ENCODE measurements at regions of chr2 and their contacts with region 1.

Region 1: GRCh38 chr2:235493775-235494715 is at the start of gene AGAP1:
- DNase-seq: peak; percentile 94
- H3K4me3 ChIP-seq: peak within 1 kb of the TSS; percentile 51 to 80 (median 68)
- H3K27ac ChIP-seq: peak within 1 kb of the TSS; percentile 80 to 88 (median 87)
- H3K4me1 ChIP-seq: peaks cover 0 to 35% (median 28%) of the 10 kb centered on the region in 4 donors
- H3K27me3 ChIP-seq: no peaks in the 10 kb centered on the region
- CTCF ChIP-seq: no peak
- EP300 ChIP-seq: no peak
- POLR2A ChIP-seq: no peak
- total RNA-seq, gene AGAP1: 18.6 to 42.7 (median 23.8) TPM

Region 2: GRCh38 chr2:234951664-234952269 is 542.3 kb before region 1 on chr2 and contains the start of gene SH3BP4:
- intact Hi-C with region 1: loop called (anchors 5 kb)
- DNase-seq: peak; percentile 86
- H3K4me3 ChIP-seq: peak within 1 kb of the TSS; percentile 70 to 97 (median 83)
- H3K27ac ChIP-seq: peak within 1 kb of the TSS; percentile 81 to 95 (median 88)
- H3K4me1 ChIP-seq: peaks cover 0 to 53% (median 44%) of the 10 kb centered on the region in 4 donors
- H3K27me3 ChIP-seq: no peaks in the 10 kb centered on the region
- CTCF ChIP-seq: no peak
- EP300 ChIP-seq: no peak
- POLR2A ChIP-seq: peak in 1 of 2 donors; percentile 21
- total RNA-seq, gene SH3BP4: 11.4 to 22.8 (median 19.1) TPM

Region 3: DNA sequence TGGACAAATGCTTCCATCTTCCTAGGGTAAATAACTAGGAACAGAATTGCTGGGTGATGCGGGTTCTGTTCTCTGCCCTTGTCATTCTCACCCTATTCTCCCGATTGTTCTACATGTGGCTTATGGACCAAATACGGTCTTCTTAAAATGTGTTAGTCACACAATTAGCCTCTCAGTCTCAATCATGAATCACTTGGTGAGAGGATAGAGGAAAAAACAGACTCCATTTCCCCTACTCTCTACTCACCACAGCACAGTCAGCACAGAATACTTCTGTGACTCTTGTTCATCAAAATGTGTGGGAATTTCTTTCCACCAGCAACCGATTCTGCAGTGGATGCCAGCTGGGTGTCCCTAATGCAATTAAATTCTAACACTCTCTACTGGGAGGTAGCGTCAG is 417.0 kb before region 1 on chr2:
- intact Hi-C with region 1: no loop called
- DNase-seq: no peak
- H3K4me3 ChIP-seq: no peak overlapping the region
- H3K27ac ChIP-seq: no peak overlapping the region
- H3K4me1 ChIP-seq: no peaks in the 10 kb centered on the region
- H3K27me3 ChIP-seq: no peaks in the 10 kb centered on the region
- CTCF ChIP-seq: no peak
- EP300 ChIP-seq: no peak
- POLR2A ChIP-seq: no peak

Region 4: GRCh38 chr2:235577404-235578330 is 83.6 kb after region 1 on chr2:
- intact Hi-C with region 1: loop called (anchors 5 kb)
- DNase-seq: peak; percentile 80
- H3K4me3 ChIP-seq: peak overlapping the region in 1 of 4 donors; percentile 14
- H3K27ac ChIP-seq: peak overlapping the region; percentile 11 to 50 (median 36)
- H3K4me1 ChIP-seq: peaks cover 0 to 19% (median 6%) of the 10 kb centered on the region in 4 donors
- H3K27me3 ChIP-seq: no peaks in the 10 kb centered on the region
- CTCF ChIP-seq: no peak
- EP300 ChIP-seq: no peak
- POLR2A ChIP-seq: no peak